ENCODE measurements at regions of chr3 and their contacts with region 1.

Region 1: DNA sequence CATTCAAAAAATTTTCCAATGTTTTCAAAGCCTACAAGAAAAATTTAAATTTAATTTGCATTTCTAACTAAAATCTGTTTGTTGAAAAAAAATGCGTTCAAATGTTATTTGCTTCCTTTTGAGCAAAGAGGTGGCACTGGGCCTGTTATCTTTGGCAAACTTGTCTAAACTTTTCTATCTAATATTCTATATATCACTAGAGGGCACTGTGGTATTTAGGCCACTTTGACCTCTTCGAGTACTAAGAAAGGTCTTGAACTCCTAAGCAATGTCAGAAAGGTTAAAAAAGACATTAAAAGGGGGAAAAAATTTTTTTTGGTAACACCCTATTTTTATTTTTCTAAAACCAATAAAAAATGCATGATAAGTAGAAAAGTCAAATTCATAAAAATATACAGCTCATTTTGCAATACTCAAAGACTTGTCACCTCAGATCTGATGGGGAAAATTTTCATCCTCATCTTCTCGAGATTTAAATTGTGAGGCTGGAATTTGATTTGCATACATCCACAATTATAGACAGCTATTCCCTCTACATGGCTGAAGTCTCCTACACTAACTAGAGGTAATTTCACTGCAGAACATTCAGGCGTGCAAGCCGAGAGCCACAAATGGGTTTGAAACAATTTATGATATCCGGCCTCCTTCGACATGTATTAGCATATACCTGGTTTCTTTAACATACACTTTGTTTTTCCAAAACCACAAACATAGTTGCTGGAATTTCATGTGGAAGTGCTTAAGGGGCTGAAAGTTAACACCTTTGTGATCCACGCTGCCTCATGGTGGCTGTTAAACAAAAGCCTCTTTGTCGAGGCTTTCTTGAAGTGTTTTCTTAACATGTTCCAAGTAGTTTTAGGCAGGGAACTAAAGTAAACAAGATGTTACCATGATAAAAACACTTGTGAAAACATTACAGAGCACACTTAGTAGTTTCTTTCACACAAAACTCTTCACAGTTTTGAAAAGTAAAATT is 576.4 kb downstream of the FOXP1 start:
- DNase-seq: no peak
- ATAC-seq: no peak
- H3K4me3 Mint-ChIP-seq: no peak overlapping the region
- H3K27ac Mint-ChIP-seq: peak overlapping the region; percentile 79
- H3K4me1 Mint-ChIP-seq: peaks cover 79% of the 10 kb centered on the region
- H3K27me3 Mint-ChIP-seq: no peaks in the 10 kb centered on the region

Region 2: DNA sequence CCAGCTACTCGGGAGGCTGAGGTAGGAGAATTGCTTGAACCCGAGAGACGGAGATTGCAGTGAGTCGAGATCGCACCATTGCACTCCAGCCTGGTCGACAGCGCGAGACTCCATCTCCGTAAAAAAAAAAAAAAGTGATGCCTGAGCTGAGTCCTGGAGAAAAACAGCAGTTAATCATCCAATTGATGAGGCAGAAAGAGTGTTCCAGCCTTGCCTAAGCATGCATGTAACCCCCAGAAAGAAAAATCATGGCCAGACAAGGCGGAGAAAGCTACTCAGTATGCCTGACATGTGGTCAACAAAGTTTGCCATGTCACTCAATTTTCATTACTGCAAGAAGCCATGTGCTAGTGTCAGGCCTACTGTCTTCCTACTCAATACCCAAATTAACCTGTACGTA is 101.6 kb before region 1 on chr3:
- CTCF ChIA-PET with region 1: no interaction called
- POLR2A ChIA-PET with region 1: no interaction called
- intact Hi-C with region 1: no loop called
- DNase-seq: no peak
- ATAC-seq: no peak
- H3K4me3 Mint-ChIP-seq: no peak overlapping the region
- H3K27ac Mint-ChIP-seq: no peak overlapping the region
- H3K4me1 Mint-ChIP-seq: no peaks in the 10 kb centered on the region
- H3K27me3 Mint-ChIP-seq: peaks cover 15% of the 10 kb centered on the region

Region 3: GRCh38 chr3:70980646-70981170 is 26.4 kb before region 1 on chr3:
- CTCF ChIA-PET with region 1: interaction called, 4 read pairs
- POLR2A ChIA-PET with region 1: no interaction called
- intact Hi-C with region 1: loop called (anchors 2 kb)
- DNase-seq: peak; percentile 24
- ATAC-seq: peak; percentile 66
- H3K4me3 Mint-ChIP-seq: no peak overlapping the region
- H3K27ac Mint-ChIP-seq: peak overlapping the region; percentile 95
- H3K4me1 Mint-ChIP-seq: peaks cover 59% of the 10 kb centered on the region
- H3K27me3 Mint-ChIP-seq: no peaks in the 10 kb centered on the region

Region 4: DNA sequence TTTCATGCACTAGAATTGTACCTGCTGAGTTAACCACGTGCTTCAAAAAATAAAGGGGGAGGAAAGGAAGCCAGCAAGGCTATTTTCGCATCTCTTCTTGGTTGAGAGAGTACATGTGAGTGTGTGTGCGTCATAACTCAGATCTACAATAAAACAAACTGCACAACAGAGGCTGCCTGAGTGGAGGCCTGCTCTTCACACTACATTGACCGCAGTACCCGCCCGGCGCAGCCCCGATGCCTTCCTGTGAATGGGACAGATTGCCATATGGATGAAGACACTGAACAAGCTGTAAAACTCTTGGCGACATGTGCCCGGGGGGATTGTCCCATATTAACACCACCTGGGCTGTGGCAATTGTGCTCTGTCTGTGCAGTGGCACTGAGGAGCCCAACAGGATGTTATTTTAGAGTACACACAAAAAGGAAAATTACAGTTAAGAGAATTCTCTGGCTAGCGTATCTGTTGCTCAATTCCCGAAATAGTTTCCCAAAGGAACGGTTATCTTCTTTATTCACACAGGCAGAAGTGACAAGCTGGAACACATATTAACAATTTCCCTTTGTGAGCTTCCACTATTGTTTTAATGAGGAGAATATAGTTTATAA is 24.9 kb after region 1 on chr3:
- CTCF ChIA-PET with region 1: interaction called, 4 read pairs
- POLR2A ChIA-PET with region 1: no interaction called
- intact Hi-C with region 1: loop called in 1 of 2 experiments (anchors 2 kb)
- DNase-seq: no peak
- ATAC-seq: peak; percentile 56
- H3K4me3 Mint-ChIP-seq: no peak overlapping the region
- H3K27ac Mint-ChIP-seq: peak overlapping the region; percentile 78
- H3K4me1 Mint-ChIP-seq: peaks cover 82% of the 10 kb centered on the region
- H3K27me3 Mint-ChIP-seq: no peaks in the 10 kb centered on the region

Region 5: GRCh38 chr3:71087143-71088018 is 80.3 kb after region 1 on chr3:
- CTCF ChIA-PET with region 1: no interaction called
- POLR2A ChIA-PET with region 1: no interaction called
- intact Hi-C with region 1: loop called (anchors 1 kb)
- DNase-seq: peak; percentile 61
- ATAC-seq: peak; percentile 74
- H3K4me3 Mint-ChIP-seq: peak overlapping the region; percentile 52
- H3K27ac Mint-ChIP-seq: peak overlapping the region; percentile 93
- H3K4me1 Mint-ChIP-seq: peaks cover 94% of the 10 kb centered on the region
- H3K27me3 Mint-ChIP-seq: no peaks in the 10 kb centered on the region

Region 6: DNA sequence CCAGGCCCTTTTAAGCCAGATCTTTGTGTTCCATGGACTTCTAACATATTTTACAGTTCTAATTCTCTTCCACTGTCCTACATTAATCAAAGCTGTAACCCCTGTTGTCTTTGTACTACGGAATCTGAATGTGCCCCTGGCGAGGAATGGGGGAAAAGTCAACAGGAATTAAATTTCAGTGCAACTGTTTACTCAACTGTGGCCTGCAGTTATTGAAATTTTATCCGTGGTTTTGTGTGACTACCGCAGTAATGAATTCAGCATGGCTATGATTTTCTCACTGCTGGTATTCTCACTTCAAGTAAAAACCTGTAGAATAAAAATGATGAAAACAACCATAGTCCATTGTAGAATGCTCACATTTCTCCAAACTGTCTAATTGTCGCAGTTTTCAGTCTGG is 188.4 kb after region 1 on chr3:
- CTCF ChIA-PET with region 1: no interaction called
- POLR2A ChIA-PET with region 1: no interaction called
- intact Hi-C with region 1: loop called in 1 of 2 experiments (anchors 5 kb)
- DNase-seq: no peak
- ATAC-seq: no peak
- H3K4me3 Mint-ChIP-seq: no peak overlapping the region
- H3K27ac Mint-ChIP-seq: peak overlapping the region; percentile 56
- H3K4me1 Mint-ChIP-seq: peaks cover 69% of the 10 kb centered on the region
- H3K27me3 Mint-ChIP-seq: no peaks in the 10 kb centered on the region

Region 7: GRCh38 chr3:71495708-71496472 is 488.8 kb after region 1 on chr3:
- CTCF ChIA-PET with region 1: no interaction called
- POLR2A ChIA-PET with region 1: no interaction called
- intact Hi-C with region 1: loop called in 1 of 2 experiments (anchors 1 kb)
- DNase-seq: peak; percentile 47
- ATAC-seq: peak; percentile 71
- H3K4me3 Mint-ChIP-seq: peak overlapping the region; percentile 56
- H3K27ac Mint-ChIP-seq: peak overlapping the region; percentile 89
- H3K4me1 Mint-ChIP-seq: peaks cover 75% of the 10 kb centered on the region
- H3K27me3 Mint-ChIP-seq: no peaks in the 10 kb centered on the region

Measured in activated CD4-positive, alpha-beta T cell treated with anti-CD3 and anti-CD28 coated beads for 36 hours (primary cell).